Right cardiac atrium (tissue), 5 donors: ENCODE measurements at regions of chr1 and their contacts with region 1.

Region 1: GRCh38 chr1:3069491-3070303 is 694 bp downstream of the PRDM16 start:
- DNase-seq: peak; percentile 31 to 73 (median 72)
- ATAC-seq: peak; percentile 63 to 71
- H3K4me3 ChIP-seq: peak overlapping the region; percentile 75
- H3K27ac ChIP-seq: peak overlapping the region; percentile 33
- H3K4me1 ChIP-seq: no peaks in the 10 kb centered on the region
- H3K27me3 ChIP-seq: no peaks in the 10 kb centered on the region

Region 2: GRCh38 chr1:3275471-3276340 is 206.0 kb after region 1 on chr1:
- intact Hi-C with region 1: loop called (anchors 5 to 10 kb)
- DNase-seq: peak in 2 of 3 donors; percentile 45 to 66
- ATAC-seq: peak in 1 of 2 donors; percentile 56
- H3K4me3 ChIP-seq: no peak overlapping the region
- H3K27ac ChIP-seq: no peak overlapping the region
- H3K4me1 ChIP-seq: no peaks in the 10 kb centered on the region
- H3K27me3 ChIP-seq: no peaks in the 10 kb centered on the region

Region 3: GRCh38 chr1:3283849-3284248 is 214.2 kb after region 1 on chr1:
- intact Hi-C with region 1: loop called (anchors 5 to 10 kb)
- DNase-seq: peak; percentile 40 to 84 (median 71)
- ATAC-seq: peak; percentile 54 to 65
- H3K4me3 ChIP-seq: no peak overlapping the region
- H3K27ac ChIP-seq: no peak overlapping the region
- H3K4me1 ChIP-seq: no peaks in the 10 kb centered on the region
- H3K27me3 ChIP-seq: no peaks in the 10 kb centered on the region

Region 4: DNA sequence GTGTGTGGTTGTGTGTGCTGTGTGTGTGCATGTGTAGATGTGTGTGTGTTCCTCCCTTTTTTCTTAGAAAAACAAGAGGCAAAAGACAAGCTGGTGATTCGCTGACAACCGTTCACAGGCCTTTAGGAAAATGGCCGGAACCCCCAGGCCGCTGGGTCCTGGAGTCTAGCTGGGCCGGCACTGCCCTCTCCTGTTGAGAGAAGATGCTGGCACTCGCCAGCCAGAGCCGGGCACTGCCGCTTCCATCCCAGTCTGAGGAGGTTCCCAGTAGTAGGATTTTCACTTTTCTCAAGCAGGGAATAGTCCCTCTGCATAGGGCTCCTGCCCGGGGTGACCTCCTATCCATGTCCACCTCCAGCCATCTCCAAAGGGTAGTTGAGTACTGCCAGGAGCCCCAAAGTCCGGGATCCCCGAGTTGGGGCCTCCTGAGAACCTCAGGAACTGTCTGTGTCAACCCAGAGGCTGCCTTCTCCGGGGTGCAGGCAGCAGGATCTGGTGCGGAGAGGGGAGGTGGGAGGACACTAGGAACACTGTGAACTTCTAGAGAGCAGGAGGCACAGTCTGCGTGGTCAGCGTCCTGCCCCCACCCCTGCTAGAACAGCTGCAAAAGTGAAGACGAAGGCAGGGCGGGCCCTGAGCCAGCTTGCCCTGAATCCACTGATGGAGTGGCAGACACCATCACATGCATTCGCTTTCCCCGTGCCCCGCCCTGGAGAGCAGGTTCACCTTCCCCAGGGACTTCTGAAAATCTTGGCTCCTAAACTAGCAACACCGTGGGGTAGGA is 340.6 kb after region 1 on chr1:
- intact Hi-C with region 1: loop called in 1 of 4 experiments (anchors 10 kb)
- DNase-seq: peak; percentile 67 to 91 (median 87)
- ATAC-seq: peak; percentile 74 to 83
- H3K4me3 ChIP-seq: no peak overlapping the region
- H3K27ac ChIP-seq: no peak overlapping the region
- H3K4me1 ChIP-seq: no peaks in the 10 kb centered on the region
- H3K27me3 ChIP-seq: no peaks in the 10 kb centered on the region